Endothelial cell of umbilical vein (primary cell): ENCODE measurements at regions of chr1 and their contacts with region 1.

Region 1: GRCh38 chr1:11858968-11859871 is 475 bp upstream of the NPPB start:
- DNase-seq: peak; percentile 61
- H3K4me3 ChIP-seq: no peak overlapping the region
- H3K27ac ChIP-seq: no peak overlapping the region
- H3K4me1 ChIP-seq: no peaks in the 10 kb centered on the region
- H3K27me3 ChIP-seq: peaks cover 18 to 20% of the 10 kb centered on the region in 2 experiments
- CTCF ChIP-seq: peak in 1 of 2 donors; percentile 55
- POLR2A ChIP-seq: no peak

Region 2: GRCh38 chr1:11845641-11846335 is 13.4 kb before region 1 on chr1:
- CTCF ChIA-PET with region 1: interaction called, 5 read pairs
- POLR2A ChIA-PET with region 1: no interaction called
- dilution Hi-C with region 1: no loop called
- intact Hi-C with region 1: loop called (anchors 1 kb)
- DNase-seq: peak; percentile 20
- H3K4me3 ChIP-seq: no peak overlapping the region
- H3K27ac ChIP-seq: no peak overlapping the region
- H3K4me1 ChIP-seq: peaks cover 7% of the 10 kb centered on the region
- H3K27me3 ChIP-seq: no peaks in the 10 kb centered on the region
- CTCF ChIP-seq: no peak
- POLR2A ChIP-seq: no peak

Region 3: DNA sequence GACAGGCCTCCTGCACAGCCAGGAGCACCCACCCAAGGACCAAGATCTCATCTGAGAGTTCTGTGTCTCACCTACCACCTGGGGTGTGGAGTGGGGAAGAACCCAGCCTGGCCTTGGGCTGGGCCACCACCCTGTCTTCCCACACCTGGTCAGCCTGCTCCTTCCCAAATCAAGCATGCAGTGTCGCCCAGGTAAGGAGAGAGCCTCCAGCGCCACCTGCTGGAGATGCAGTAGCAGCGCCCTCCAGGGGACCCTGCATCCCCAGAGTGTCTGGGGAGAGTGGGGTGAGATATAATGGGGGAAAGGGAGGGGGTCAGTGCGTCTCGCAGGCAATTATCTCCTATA is 34.7 kb after region 1 on chr1:
- CTCF ChIA-PET with region 1: interaction called, 5 read pairs
- POLR2A ChIA-PET with region 1: no interaction called
- dilution Hi-C with region 1: no loop called
- intact Hi-C with region 1: loop called (anchors 2 kb)
- DNase-seq: peak; percentile 38
- H3K4me3 ChIP-seq: no peak overlapping the region
- H3K27ac ChIP-seq: no peak overlapping the region
- H3K4me1 ChIP-seq: no peaks in the 10 kb centered on the region
- H3K27me3 ChIP-seq: peaks cover 7 to 9% of the 10 kb centered on the region in 2 experiments
- CTCF ChIP-seq: peak; percentile 88 to 95
- POLR2A ChIP-seq: no peak

Region 4: DNA sequence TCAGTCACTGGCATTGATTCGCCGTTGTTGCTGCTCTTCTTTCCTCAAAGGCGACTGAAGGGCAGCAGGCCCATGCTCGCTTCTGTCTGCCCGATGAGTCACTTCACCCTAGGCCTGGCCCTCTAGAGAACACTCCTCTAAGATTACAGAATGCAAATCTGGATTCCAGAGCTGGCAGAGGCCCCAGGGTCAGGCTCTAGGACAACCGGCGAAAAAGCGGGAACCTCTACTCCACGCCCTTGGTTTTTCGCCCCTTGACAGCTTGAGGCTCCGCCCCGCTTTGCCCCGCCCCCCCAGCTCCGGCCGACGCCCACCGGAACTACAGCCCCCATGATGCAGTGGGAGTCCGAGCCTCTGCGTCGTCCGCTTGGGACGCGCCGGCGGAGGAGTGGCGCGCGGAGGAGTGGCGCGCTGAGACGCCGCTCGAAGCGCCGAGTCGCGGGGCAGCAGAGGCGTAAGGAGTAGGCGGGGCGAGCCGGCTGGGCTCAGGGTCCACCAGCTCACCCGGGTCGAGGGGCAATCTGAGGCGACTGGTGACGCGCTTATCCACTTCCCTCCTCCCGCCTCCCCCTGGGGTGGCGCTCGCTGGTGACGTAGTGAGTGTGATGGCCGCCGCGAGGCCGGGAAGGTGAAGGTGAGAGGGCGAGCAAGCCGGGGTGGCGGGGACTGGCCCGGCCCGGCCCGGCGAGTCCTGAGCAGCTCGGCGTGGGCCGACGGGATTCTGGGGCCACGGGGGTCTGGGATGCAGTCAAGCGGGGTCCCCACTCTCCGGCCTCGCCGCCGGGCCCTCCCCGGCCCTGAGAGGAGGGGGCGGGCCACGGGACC is 120.8 kb after region 1 on chr1 and contains the start of gene MFN2:
- CTCF ChIA-PET with region 1: no interaction called
- POLR2A ChIA-PET with region 1: no interaction called
- dilution Hi-C with region 1: no loop called
- intact Hi-C with region 1: no loop called
- DNase-seq: peak; percentile 99
- H3K4me3 ChIP-seq: peak within 1 kb of the TSS; percentile 86 to 94 (median 89)
- H3K27ac ChIP-seq: peak within 1 kb of the TSS; percentile 69
- H3K4me1 ChIP-seq: peaks cover 18% of the 10 kb centered on the region
- H3K27me3 ChIP-seq: no peaks in the 10 kb centered on the region
- CTCF ChIP-seq: no peak
- POLR2A ChIP-seq: peak; percentile 61
- total RNA-seq, gene MFN2: 66.6 and 82.4 TPM in 2 replicates